AG04449 (cell line): ENCODE measurements at regions of chr22 and their contacts with region 1.

Region 1: GRCh38 chr22:31107178-31107893 is at the start of gene SELENOM:
- DNase-seq: peak; percentile 88
- H3K4me3 ChIP-seq: peak within 1 kb of the TSS; percentile 97
- CTCF ChIP-seq: peak; percentile 97

Region 2: DNA sequence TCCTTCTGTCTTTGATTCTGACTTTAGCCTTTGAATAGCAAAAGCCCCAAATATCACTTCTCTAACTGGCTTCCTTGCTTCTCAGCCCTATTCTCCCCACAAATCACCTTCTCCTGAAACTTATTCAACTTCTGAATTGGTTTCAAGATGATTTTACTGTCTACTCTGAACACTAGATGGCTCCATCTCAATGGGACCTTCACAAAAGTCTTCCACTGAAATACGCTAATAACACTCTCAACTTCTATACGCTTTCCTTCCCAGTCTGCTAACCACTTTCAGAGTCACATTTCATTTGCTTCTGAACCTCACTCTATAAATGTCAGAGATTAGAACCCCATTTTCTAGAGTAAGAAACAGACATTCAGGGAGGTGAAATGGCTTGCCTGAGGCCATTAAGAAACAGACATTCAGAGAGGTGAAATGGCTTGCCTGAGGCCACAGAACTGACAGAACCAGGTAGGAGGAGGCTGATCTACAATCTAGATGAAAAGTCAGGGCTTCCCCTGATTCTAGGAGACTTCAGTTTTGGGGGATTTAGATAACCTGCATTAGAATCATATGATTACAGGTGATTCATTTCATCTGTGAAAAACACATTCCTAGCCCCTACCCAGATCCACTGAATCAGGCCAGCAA is 159.4 kb before region 1 on chr22:
- CTCF ChIA-PET with region 1: interaction called, 10 read pairs
- POLR2A ChIA-PET with region 1: no interaction called
- DNase-seq: peak; percentile 16
- H3K4me3 ChIP-seq: no peak overlapping the region
- CTCF ChIP-seq: peak; percentile 40

Region 3: GRCh38 chr22:31119026-31119717 is 11.8 kb after region 1 on chr22:
- CTCF ChIA-PET with region 1: interaction called, 29 read pairs
- POLR2A ChIA-PET with region 1: interaction called, 5 read pairs
- DNase-seq: no peak
- H3K4me3 ChIP-seq: no peak overlapping the region
- CTCF ChIP-seq: no peak

Region 4: DNA sequence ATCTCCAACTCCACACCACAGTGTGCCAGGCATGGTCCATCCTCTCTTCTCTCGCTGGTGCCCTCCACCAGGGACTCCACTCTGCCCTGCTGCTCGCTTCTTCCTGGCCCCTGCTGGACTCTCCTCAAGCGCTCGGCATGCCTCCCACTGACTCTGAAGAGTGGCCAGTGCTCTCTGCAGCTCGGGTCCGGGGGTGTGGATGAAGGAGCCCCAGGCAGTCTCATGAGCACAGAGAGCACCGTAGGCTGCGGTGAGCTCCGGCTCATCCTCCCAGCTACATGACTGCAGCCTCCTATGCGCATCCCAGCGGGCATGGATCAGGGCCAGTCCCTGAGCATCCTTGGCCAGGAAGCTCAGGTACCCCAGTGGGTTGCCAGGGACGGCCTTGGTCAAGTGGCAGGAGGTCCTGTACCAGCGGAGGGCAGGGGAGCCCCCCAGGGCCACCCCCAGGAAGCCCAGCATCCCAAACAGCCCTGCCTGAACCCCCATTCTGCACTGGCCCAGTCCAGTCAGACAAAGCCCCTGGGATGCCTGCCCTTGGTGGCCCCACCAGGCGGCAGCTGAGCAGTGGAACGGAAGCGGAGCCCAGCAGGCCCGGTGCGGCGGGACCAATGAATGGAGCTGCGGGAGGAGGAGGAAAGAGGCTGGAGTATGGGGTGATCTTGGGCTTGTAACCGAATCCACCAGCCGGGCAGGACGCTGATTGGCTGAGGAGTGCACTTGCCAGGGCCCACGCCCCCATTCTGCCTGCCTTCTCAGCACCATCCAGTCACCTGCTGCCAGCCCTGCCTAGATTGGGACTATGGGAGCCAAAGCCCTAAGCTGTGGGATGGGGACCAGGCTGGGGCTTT is 32.8 kb after region 1 on chr22 and contains the start of gene PLA2G3:
- CTCF ChIA-PET with region 1: interaction called, 21 read pairs
- POLR2A ChIA-PET with region 1: no interaction called
- DNase-seq: no peak
- H3K4me3 ChIP-seq: no peak within 1 kb of the TSS
- CTCF ChIP-seq: peak; percentile 17

Region 5: GRCh38 chr22:31230871-31231621 is 123.7 kb after region 1 on chr22:
- CTCF ChIA-PET with region 1: interaction called, 66 read pairs
- POLR2A ChIA-PET with region 1: interaction called, 3 read pairs
- DNase-seq: no peak
- H3K4me3 ChIP-seq: no peak overlapping the region
- CTCF ChIP-seq: peak; percentile 68

Region 6: DNA sequence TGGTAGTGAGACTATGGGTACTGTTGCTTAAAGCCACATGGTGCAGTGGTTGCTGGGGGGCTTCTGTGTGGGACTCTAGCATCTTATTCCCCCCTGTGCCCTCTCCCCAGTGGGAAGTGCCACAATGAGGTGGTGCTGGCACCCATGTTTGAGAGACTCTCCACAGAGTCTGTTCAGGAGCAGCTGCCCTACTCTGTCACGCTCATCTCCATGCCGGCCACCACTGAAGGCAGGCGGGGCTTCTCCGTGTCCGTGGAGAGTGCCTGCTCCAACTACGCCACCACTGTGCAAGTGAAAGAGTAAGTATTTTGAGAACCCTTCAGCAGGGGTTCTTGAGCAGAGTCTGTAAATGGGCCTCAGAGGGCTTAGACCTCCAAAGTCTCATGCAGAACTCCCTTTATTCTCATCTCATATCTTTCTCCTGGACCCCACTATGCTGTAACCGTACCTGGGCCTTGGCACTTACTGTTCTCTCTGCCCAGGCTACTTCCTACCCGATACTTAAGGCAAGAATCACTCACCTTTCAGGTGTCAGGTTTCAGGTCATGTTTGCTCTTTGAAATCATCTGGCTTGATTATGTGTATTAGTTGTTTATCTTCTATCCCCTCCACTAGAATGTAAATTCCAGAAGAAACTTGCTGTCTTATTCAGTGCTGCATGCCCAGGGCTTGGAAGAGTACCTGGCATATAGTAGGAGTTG is 152.6 kb after region 1 on chr22:
- CTCF ChIA-PET with region 1: no interaction called
- POLR2A ChIA-PET with region 1: no interaction called
- DNase-seq: no peak
- H3K4me3 ChIP-seq: no peak overlapping the region
- CTCF ChIP-seq: no peak

Region 7: DNA sequence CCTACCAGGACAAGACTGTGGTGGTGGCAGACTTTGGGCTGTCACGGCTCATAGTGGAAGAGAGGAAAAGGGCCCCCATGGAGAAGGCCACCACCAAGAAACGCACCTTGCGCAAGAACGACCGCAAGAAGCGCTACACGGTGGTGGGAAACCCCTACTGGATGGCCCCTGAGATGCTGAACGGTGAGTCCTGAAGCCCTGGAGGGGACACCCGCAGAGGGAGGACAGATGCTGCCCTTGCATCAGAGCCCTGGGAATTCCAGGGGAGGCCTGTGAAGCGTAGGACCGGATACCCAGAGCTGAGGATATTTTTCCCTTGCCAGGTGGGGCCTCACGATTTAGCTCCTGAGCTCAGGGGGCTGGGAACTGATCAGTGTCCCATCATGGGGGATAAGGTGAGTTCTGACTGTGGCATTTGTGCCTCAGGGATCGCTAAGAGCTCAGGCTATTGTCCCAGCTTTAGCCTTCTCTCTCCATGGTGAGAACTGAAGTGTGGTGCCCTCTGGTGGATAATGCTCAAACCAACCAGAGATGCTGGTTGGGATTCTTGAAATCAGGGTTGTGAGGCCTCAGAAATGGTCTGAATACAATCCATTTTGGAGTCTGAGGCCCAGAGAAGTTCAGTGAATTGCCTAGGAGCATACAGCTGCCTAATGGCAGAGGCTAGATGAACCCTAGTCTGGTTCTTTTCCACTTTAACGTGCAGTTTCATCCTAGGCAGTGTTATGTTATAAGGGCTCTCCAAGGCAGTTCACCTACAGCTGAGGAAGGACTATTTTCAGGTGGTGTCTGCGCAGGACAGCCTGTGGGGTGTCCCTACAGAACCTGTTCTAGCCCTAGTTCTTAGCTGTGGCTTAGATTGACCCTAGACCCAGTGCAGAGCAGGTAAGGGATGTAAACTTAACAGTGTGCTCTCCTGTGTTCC is 165.4 kb after region 1 on chr22:
- CTCF ChIA-PET with region 1: interaction called, 47 read pairs
- POLR2A ChIA-PET with region 1: interaction called, 3 read pairs
- DNase-seq: no peak
- H3K4me3 ChIP-seq: no peak overlapping the region
- CTCF ChIP-seq: peak; percentile 74

Region 8: GRCh38 chr22:31399211-31400028 is 292.1 kb after region 1 on chr22 and contains the start of gene DRG1:
- CTCF ChIA-PET with region 1: no interaction called
- POLR2A ChIA-PET with region 1: no interaction called
- DNase-seq: peak; percentile 44
- H3K4me3 ChIP-seq: peak within 1 kb of the TSS; percentile 99
- CTCF ChIP-seq: no peak

Region 9: GRCh38 chr22:31544481-31545480 is 437.4 kb after region 1 on chr22:
- CTCF ChIA-PET with region 1: no interaction called
- POLR2A ChIA-PET with region 1: no interaction called
- DNase-seq: no peak
- H3K4me3 ChIP-seq: no peak overlapping the region
- CTCF ChIP-seq: no peak